ENCODE measurements at regions of chr16 and their contacts with region 1.

Region 1: GRCh38 chr16:85234310-85235204 is 122.3 kb upstream of the CIBAR2 start:
- DNase-seq: peak; percentile 81 to 91
- ATAC-seq: peak; percentile 73
- H3K4me3 ChIP-seq: no peak overlapping the region
- H3K27ac ChIP-seq: no peak overlapping the region
- H3K4me1 ChIP-seq: no peaks in the 10 kb centered on the region
- H3K27me3 ChIP-seq: no peaks in the 10 kb centered on the region

Region 2: GRCh38 chr16:85137323-85138072 is 97.1 kb before region 1 on chr16:
- intact Hi-C with region 1: loop called in 1 of 2 experiments (anchors 5 kb)
- DNase-seq: peak; percentile 97
- ATAC-seq: peak; percentile 94
- H3K4me3 ChIP-seq: no peak overlapping the region
- H3K27ac ChIP-seq: no peak overlapping the region
- H3K4me1 ChIP-seq: no peaks in the 10 kb centered on the region
- H3K27me3 ChIP-seq: no peaks in the 10 kb centered on the region

Region 3: DNA sequence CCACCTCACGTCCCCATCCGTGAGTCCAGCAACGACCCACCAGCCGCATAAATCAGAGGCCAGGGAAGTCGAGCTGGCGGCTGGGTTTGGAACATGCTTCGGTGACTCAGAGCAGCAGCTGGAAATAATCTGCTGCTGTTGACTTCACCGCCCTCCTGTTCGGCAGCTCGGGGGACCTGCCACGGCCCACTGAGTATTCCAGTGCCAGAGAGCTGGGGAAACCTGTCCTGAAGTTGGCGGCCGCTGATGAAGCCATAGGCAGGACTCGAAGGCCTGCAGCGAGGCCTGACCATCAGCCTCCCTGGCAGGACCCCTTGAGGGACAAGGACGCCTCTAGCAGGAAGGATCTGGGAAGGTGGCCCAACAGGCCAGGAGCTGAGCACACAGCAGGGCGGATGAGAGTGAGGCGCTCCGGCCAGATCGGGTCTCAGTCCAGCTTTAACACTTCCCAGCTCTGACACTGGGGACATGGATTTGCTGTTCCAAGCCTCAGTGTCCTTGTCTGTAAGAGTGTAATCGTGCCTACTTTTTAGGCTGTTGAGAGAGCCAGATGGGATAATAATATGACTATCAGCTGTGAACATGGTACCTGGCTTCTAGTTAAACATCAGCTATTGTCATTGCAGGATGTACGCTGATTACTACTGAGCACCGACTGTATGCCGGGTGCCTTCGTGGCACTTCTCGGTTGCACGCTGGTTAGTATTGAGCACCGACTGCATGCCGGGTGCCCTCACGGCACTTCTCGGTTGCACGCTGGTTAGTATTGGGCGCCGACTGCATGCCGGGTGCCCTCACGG is 71.9 kb before region 1 on chr16:
- intact Hi-C with region 1: loop called in 1 of 2 experiments (anchors 5 kb)
- DNase-seq: peak; percentile 88 to 90
- ATAC-seq: peak; percentile 65
- H3K4me3 ChIP-seq: no peak overlapping the region
- H3K27ac ChIP-seq: peak overlapping the region in 1 of 2 donors; percentile 26
- H3K4me1 ChIP-seq: peaks cover 0 to 3% of the 10 kb centered on the region in 2 donors
- H3K27me3 ChIP-seq: no peaks in the 10 kb centered on the region

Region 4: GRCh38 chr16:85610508-85611332 is 376.2 kb after region 1 on chr16:
- intact Hi-C with region 1: no loop called
- DNase-seq: peak; percentile 90 to 96
- ATAC-seq: peak; percentile 78
- H3K4me3 ChIP-seq: peak overlapping the region in 1 of 2 donors; percentile 33
- H3K27ac ChIP-seq: peak overlapping the region in 1 of 2 donors; percentile 85
- H3K4me1 ChIP-seq: no peaks in the 10 kb centered on the region
- H3K27me3 ChIP-seq: no peaks in the 10 kb centered on the region

Measured in aorta (tissue), 5 donors.